Activated T-helper 1 cell treated with anti-CD3 and anti-CD28 coated beads, Interleukin-12 subunit alpha, Interleukin-12 subunit beta, Interleukin-2, Interleukin-4 antibody, amounts not matched to agents 30 ng/mL and 10 ng/mL and 1 ng/mL, durations not matched to agents 14 hours and 24 hours and 36 hours (primary cell): ENCODE measurements at regions of chr11 and their contacts with region 1.

Region 1: DNA sequence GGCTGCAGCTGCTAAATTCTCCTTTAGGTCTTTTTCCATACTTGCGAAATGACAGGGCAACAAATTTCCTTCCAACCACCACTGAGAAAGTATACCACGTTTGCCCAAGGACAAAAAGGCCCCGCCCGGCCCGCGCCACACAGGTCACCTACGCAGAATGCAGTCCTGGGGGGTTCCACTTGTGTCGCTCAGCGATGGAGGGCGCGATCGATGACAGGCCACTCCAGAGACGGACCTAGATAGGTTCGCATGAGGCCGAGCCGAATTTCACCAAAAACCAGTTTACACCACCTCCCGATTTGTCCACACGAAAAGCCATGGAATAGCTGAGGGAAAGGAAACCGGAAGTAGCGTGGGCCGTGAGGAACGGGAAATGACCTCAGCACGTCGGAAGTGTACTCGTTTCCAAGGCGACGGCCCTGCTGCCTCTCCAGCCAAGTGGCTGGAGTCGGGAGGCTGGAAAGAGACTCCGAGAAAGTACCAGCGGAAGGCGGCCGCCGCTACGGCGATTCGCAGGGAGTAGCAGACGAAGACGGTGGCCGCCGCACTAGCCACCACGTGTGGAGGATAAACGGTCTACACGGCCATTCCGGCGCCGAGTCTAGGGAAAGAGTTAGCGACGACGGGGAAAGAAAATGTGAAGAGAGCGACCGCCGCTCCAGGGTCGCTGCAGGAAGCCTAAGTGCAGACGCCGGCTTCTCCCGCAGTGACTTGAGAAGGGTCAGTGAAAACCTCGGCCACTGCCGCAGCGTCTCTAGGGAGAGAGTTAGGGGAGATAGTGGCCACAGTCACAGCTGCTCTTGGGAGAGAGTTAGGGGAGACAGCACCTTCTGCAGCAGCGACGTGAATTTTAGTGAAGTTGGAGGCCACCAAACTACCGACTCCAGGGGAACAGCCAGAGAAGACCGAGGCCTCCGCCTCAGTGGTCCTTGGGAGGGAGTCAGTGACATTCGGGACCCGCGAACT is at the start of gene ANKRD42:
- DNase-seq: peak; percentile 83
- H3K4me3 Mint-ChIP-seq: peak within 1 kb of the TSS; percentile 93
- H3K27ac Mint-ChIP-seq: peak within 1 kb of the TSS; percentile 94
- H3K4me1 Mint-ChIP-seq: peaks cover 40% of the 10 kb centered on the region
- H3K27me3 Mint-ChIP-seq: no peaks in the 10 kb centered on the region
- total RNA-seq, gene ANKRD42: 3.3 and 3.5 TPM in 2 replicates

Region 2: GRCh38 chr11:82906244-82906654 is 287.3 kb before region 1 on chr11:
- intact Hi-C with region 1: loop called (anchors 1 kb)
- DNase-seq: no peak
- H3K4me3 Mint-ChIP-seq: no peak overlapping the region
- H3K27ac Mint-ChIP-seq: no peak overlapping the region
- H3K4me1 Mint-ChIP-seq: peaks cover 56% of the 10 kb centered on the region
- H3K27me3 Mint-ChIP-seq: no peaks in the 10 kb centered on the region

Region 3: GRCh38 chr11:83007909-83008580 is 185.6 kb before region 1 on chr11:
- intact Hi-C with region 1: loop called (anchors 5 kb)
- DNase-seq: no peak
- H3K4me3 Mint-ChIP-seq: no peak overlapping the region
- H3K27ac Mint-ChIP-seq: no peak overlapping the region
- H3K4me1 Mint-ChIP-seq: peaks cover 57% of the 10 kb centered on the region
- H3K27me3 Mint-ChIP-seq: no peaks in the 10 kb centered on the region

Region 4: DNA sequence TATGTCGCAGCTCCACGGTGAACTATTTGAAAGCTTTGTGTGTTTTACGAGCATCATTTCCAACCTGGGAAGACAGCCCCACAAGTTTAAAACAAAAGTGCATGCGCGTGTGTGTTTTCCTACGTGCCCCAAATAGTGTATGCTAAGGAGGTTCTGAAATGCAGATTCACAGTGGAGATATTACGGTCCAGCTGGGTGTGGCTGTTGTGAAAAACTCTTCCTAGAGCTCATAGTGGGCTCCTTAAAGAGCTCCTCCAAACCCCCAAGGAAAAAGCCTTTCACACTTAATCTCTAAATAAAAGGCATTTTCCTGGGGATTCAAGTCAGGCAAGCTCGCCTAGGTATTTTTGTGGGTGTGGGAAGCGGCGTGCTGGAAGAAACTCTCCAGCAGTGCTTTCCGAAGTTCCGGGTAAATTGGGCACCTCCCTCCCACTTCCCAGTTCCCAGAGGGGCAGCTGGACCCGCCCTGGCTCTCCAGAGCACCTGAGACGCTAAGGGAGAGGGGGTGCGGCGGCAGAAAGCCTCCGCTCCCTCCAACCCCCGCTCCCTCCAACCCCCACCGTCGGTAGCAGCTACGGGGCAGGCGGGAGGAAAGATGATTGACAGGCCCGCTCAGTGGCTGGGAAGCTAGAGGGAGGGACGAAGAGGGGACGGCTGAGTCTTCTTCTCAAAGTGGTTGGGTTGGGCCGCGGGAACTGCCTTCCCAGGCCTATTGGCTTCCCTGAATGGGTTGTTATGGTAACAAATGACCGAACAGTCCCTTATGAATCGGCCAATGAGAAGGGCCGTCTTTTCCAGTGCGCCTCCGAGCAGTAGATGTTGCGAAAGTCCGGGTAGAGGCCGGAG is 37.2 kb before region 1 on chr11:
- intact Hi-C with region 1: loop called (anchors 1 kb)
- DNase-seq: peak; percentile 95
- H3K4me3 Mint-ChIP-seq: peak overlapping the region; percentile 97
- H3K27ac Mint-ChIP-seq: peak overlapping the region; percentile 96
- H3K4me1 Mint-ChIP-seq: peaks cover 36% of the 10 kb centered on the region
- H3K27me3 Mint-ChIP-seq: no peaks in the 10 kb centered on the region

Region 5: GRCh38 chr11:83181815-83182214 is 11.8 kb before region 1 on chr11:
- intact Hi-C with region 1: loop called (anchors 2 kb)
- DNase-seq: no peak
- H3K4me3 Mint-ChIP-seq: no peak overlapping the region
- H3K27ac Mint-ChIP-seq: no peak overlapping the region
- H3K4me1 Mint-ChIP-seq: peaks cover 26% of the 10 kb centered on the region
- H3K27me3 Mint-ChIP-seq: no peaks in the 10 kb centered on the region

Region 6: DNA sequence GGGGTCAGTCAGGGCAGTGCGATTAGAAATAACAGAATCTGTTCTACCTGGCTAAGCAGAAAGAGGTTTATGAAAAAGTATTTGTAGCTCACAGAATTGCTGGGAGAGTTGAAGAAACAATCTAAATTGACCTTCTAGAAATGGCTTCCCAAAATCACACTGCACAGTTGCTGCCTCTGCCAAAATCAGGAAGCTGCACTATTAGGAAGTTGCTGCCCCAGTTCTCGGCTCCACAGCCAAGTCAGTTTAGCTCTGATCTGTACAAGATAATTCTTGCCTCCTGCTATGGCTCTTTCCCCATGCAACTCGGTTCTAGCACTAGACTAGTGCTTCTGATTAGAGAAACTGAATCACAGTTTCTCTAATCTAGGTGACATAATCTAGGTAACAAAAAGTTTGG is 108.6 kb after region 1 on chr11:
- intact Hi-C with region 1: no loop called
- DNase-seq: no peak
- H3K4me3 Mint-ChIP-seq: no peak overlapping the region
- H3K27ac Mint-ChIP-seq: no peak overlapping the region
- H3K4me1 Mint-ChIP-seq: no peaks in the 10 kb centered on the region
- H3K27me3 Mint-ChIP-seq: peaks cover 9% of the 10 kb centered on the region